Posterior vena cava (tissue), 2 donors: ENCODE measurements at regions of chr5 and their contacts with region 1.

Region 1: GRCh38 chr5:119411935-119412602 is 40.2 kb upstream of the HSD17B4 start:
- DNase-seq: no peak

Region 2: DNA sequence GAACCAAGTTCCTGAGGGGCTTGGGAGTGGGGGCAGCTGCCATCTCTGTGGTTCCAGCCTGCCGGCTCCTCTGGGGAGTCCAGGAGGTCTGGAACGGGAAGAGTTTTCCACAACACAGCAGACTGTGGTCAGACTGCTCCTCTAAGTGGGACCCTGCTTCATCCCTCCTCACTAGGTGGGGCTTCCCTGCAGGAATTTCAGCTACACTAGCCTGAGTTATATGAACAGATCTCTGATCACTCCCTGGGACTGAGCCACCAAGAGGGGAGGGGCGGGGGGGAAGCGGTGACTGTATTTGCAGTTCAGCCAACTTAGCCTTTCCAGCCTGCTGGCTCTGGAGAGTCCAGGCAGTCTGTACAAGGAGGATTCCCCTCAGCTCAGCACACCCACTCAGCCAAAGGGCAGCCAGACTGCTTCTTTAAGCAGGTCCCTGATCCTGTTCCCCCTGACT is 443.1 kb before region 1 on chr5:
- intact Hi-C with region 1: no loop called
- DNase-seq: no peak

Region 3: DNA sequence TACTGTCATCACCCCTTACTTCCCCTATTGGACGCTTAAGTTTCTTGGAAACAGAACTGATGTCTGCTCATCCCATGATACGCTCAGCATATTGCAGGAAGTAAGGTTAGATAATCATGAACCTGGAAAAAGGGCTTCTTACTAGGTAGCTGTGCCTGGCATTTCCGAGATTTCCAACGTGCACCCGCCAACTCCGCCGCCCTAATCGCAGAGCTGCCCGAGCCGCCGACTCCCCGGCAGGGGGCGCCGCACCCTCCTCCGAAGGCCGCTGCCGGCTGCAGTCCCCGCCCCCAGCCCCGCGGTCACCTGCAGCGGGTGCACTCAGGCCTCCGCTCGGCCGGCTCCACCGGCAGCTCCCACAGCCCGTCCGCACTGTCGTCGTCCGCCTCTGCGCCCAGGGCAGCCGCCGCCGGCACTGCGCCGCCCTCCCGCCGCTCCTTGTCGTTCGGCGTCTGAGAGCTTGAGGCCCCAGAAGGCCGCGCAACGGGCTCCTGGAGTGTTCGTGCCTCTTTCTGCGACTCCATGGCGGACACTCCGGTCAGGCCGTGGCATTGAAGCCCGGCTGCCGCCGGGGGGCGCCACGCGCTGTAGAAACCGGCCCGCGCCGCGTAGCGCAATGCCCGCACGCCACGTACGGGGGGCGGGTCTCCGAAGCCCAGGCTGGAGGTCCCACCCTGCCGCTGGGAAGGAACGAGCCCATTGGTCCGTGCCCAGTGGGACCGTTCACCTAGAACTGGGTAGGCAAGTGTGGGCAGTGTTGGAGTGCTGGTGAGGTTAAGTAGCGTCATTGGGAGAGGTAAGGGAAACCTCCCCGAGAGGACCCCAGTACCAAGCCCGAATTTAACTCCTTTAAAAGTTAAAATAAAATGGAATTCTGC is 423.8 kb before region 1 on chr5 and contains the start of gene DTWD2:
- intact Hi-C with region 1: loop called in 1 of 2 experiments (anchors 10 kb)
- DNase-seq: peak; percentile 97
- total RNA-seq, gene DTWD2: 7.6 to 8.5 TPM

Region 4: DNA sequence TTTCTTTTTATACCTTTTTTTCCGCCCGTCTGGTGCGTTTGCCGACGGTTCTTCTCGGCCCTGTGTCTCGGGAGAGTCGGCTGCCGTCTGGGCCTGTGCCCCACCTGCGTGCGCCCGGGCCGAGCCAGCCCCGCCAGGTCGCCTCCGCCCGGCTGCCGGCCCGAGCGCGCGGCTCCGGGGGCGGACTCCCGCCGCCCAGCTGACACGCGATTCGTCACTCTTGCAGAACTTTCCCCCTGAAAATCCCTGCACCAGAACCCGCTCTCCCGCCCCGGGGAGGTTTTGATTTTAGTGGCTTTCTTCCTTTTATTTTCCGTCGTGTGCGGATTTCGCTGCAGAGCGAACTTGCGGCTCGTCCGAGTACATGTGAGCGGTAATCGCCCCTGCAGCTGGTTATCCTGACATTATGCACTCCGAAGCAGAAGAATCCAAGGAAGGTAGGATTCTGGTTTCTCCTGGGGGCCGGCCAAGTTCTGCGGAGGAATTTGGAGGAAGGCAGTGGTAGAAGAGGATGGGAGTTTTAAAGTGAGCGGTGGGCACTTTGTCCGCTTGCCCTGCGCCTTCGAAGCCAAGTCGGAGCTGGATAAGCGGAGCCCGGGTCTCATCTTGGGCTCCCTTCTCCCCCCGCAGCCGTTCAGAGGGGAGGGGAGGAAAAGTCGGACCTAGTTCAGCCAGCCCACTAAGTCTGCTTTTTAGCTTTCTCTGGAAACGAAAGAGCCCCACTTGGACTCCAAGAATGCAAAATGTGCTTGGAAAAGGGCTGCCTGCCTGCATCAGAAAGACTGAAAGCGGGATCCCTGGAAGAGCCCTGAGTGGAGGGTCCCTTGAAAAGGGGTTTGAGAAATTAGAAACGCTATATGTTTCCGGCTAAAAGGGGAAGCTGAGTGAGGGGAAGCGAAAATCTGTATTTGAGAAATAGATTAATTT is 56.1 kb before region 1 on chr5 and contains the start of gene TNFAIP8:
- intact Hi-C with region 1: loop called in 1 of 2 experiments (anchors 5 kb)
- DNase-seq: peak; percentile 82
- total RNA-seq, gene TNFAIP8: 10.8 to 12.4 TPM